ENCODE measurements at regions of chr6 and their contacts with region 1.

Region 1: GRCh38 chr6:27893059-27893835 is 18.9 kb downstream of the OR2B2 start:
- DNase-seq: peak; percentile 96
- H3K4me3 ChIP-seq: peak overlapping the region; percentile 94
- H3K27ac ChIP-seq: peak overlapping the region; percentile 100
- H3K4me1 ChIP-seq: peaks cover 36% of the 10 kb centered on the region
- CTCF ChIP-seq: no peak

Region 2: GRCh38 chr6:26054857-26055669 is 1838.2 kb before region 1 on chr6:
- CTCF ChIA-PET with region 1: no interaction called
- POLR2A ChIA-PET with region 1: interaction called, 10 read pairs
- intact Hi-C with region 1: no loop called
- DNase-seq: peak; percentile 93
- H3K4me3 ChIP-seq: peak overlapping the region; percentile 70
- H3K27ac ChIP-seq: peak overlapping the region; percentile 93
- H3K4me1 ChIP-seq: peaks cover 41% of the 10 kb centered on the region
- CTCF ChIP-seq: no peak

Region 3: DNA sequence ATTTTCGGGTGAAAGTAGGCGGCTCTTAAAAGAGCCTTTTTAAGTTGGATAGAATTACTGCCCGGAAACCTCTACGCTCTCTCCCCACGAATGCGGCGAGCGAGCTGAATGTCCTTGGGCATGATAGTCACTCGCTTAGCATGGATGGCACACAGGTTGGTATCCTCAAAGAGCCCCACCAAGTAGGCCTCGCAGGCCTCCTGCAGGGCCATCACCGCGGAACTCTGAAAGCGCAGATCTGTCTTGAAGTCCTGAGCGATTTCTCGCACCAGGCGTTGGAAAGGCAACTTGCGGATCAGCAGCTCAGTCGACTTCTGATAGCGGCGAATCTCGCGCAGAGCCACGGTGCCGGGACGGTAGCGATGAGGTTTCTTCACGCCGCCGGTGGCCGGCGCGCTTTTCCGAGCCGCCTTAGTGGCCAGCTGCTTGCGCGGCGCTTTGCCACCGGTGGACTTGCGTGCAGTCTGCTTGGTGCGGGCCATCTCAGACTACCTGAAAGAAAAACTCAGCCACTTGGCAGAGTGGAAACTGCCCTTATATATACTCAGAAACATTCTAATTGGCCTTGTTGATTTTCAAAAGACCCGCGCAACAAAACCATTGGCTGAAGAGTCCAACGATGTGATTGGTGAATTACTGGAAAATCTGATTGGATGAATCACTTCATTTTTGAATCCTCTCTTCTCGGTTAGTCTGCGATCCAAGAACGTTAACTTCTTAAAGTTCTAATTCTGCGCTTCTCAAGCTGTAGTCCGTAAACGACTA is 1622.2 kb before region 1 on chr6:
- CTCF ChIA-PET with region 1: no interaction called
- POLR2A ChIA-PET with region 1: interaction called, 9 read pairs
- intact Hi-C with region 1: loop called (anchors 5 kb)
- DNase-seq: peak; percentile 98
- H3K4me3 ChIP-seq: peak overlapping the region; percentile 87
- H3K27ac ChIP-seq: peak overlapping the region; percentile 99
- H3K4me1 ChIP-seq: peaks cover 42% of the 10 kb centered on the region
- CTCF ChIP-seq: no peak; the same call in 1 of the 2 replicates

Region 4: DNA sequence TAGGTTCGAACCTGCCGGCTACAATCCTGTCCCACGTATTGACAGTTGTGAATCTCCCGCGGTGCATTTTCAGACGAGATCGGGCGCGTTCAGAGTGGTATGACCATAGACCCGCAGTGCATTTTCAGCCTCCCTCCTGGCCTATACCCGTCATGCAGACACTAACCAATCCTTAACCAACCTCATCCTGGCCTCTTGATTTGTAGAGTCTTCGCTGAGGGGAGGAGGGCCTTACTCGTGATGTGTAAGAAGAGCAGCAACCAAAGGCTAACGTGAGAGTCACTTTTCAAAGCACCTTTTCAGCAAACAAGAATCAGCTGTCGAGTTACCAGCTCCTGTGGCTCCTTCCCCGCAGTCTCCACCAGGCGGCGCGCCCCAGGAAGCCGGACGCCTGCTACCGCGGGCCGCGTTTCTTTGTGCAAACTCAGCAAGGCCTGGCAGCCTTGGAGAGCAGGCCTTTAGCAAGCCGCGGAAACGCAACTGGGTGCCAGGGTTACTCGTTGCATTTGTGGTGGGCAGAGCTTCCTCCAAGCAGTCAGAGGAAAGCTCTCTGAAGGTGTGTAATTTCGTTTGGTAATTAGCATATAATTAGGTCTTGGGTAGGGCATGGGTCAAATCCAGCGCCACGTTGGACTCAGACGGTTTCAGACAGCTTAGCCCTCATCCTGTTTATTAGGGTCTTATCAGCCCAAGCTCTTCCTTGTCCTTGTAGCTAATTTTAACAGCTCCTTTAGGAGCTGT is 120.8 kb before region 1 on chr6:
- CTCF ChIA-PET with region 1: no interaction called
- POLR2A ChIA-PET with region 1: no interaction called
- intact Hi-C with region 1: no loop called
- DNase-seq: peak; percentile 80
- H3K4me3 ChIP-seq: no peak overlapping the region
- H3K27ac ChIP-seq: no peak overlapping the region
- H3K4me1 ChIP-seq: peaks cover 8% of the 10 kb centered on the region
- CTCF ChIP-seq: peak; percentile 87

Region 5: DNA sequence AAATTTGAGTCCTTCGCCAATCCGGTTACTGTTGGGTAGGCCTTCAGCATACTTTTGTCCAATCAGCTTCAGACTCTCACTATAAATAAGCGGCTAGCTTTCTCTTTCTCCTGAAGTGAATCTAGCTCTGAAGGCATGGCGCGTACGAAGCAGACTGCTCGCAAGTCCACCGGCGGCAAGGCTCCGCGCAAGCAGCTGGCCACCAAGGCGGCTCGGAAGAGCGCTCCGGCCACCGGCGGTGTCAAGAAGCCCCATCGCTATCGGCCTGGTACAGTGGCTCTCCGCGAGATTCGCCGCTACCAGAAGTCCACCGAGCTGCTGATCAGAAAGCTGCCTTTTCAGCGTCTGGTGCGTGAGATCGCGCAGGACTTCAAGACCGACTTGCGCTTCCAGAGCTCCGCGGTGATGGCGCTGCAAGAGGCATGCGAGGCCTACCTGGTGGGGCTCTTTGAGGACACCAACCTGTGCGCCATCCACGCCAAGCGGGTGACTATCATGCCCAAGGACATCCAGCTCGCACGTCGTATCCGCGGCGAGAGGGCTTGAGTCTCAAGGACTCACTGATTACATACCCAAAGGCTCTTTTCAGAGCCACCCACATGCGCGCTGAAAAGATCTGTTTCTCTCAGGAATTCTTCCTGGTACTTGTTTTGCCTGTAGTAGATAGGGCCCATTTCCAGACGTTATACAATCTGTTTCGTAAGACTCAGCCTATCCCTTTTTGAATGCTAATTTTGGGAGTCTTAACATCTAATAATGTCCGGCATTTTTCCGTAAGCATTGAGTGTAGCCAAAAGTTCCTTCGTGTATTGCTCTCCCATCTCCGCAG is 83.1 kb before region 1 on chr6:
- CTCF ChIA-PET with region 1: interaction called, 3 read pairs
- POLR2A ChIA-PET with region 1: interaction called, 286 read pairs
- intact Hi-C with region 1: loop called (anchors 2 kb)
- DNase-seq: peak; percentile 96
- H3K4me3 ChIP-seq: peak overlapping the region; percentile 82
- H3K27ac ChIP-seq: peak overlapping the region; percentile 96
- H3K4me1 ChIP-seq: peaks cover 62% of the 10 kb centered on the region
- CTCF ChIP-seq: peak; percentile 12; the same call in 1 of the 2 replicates

Region 6: GRCh38 chr6:27864906-27865849 is 28.1 kb before region 1 on chr6:
- CTCF ChIA-PET with region 1: interaction called, 3 read pairs
- POLR2A ChIA-PET with region 1: interaction called, 407 read pairs
- intact Hi-C with region 1: loop called (anchors 1 kb)
- DNase-seq: peak; percentile 99
- H3K4me3 ChIP-seq: peak overlapping the region; percentile 67
- H3K27ac ChIP-seq: peak overlapping the region; percentile 99
- H3K4me1 ChIP-seq: peaks cover 60% of the 10 kb centered on the region
- CTCF ChIP-seq: no peak

Region 7: DNA sequence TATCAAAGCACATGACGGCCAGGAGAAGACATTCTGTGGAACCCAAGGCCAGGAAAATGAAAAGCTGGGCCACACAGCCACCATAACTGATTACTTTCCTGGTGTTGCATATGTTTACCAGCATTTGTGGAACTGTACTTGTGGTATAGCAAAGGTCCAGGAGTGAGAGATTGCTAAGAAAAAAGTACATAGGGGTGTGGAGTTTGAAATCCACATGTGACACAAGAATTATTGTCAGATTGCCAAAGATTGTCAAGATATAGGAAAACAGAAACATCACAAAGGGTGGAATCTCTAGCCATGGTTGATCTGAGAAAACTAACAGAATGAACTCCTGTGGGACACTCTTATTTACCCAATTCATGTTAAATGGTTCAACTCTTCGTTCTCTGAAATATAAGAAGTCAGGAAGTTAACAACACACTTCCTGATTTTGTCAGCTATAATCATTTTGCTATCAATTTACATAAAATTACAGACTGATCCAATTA is 18.8 kb after region 1 on chr6 and contains the start of gene OR2B2:
- CTCF ChIA-PET with region 1: no interaction called
- POLR2A ChIA-PET with region 1: no interaction called
- intact Hi-C with region 1: no loop called
- DNase-seq: no peak
- H3K4me3 ChIP-seq: no peak within 1 kb of the TSS
- H3K27ac ChIP-seq: no peak within 1 kb of the TSS
- H3K4me1 ChIP-seq: no peaks in the 10 kb centered on the region
- CTCF ChIP-seq: no peak
- total RNA-seq, gene OR2B2: not detected in 2 replicates

Region 8: GRCh38 chr6:28053584-28053983 is 160.3 kb after region 1 on chr6:
- CTCF ChIA-PET with region 1: no interaction called
- POLR2A ChIA-PET with region 1: no interaction called
- intact Hi-C with region 1: no loop called
- DNase-seq: no peak
- H3K4me3 ChIP-seq: no peak overlapping the region
- H3K27ac ChIP-seq: no peak overlapping the region
- H3K4me1 ChIP-seq: no peaks in the 10 kb centered on the region
- CTCF ChIP-seq: no peak

Region 9: DNA sequence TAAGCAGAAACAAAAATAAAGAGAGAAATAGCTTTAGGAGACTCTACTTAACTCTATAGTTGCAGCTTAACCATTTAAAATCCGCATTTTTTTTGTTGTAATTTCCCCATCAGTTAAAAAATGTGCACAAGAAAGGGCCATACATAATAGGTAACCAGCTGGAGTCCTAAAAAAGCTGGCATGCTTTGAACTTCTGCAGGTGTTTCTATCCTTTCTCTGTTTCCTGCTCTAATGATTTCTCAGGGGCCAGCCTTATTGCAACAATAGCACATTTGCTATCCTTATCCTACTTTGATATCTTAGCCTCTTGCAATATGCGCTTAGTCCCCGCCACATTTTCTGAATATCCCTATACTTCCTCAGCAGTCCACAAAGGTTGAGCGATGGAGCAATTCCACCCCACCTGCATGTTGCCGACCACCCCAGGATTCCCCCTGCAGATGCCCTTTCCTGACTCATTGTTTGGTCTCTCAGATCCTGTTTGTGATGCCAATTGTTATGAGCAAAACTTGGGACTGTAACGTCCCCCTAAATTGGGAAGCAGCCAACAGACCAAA is 982.0 kb after region 1 on chr6:
- CTCF ChIA-PET with region 1: no interaction called
- POLR2A ChIA-PET with region 1: interaction called, 11 read pairs
- intact Hi-C with region 1: loop called (anchors 5 kb)
- DNase-seq: peak; percentile 90
- H3K4me3 ChIP-seq: peak overlapping the region; percentile 47
- H3K27ac ChIP-seq: peak overlapping the region; percentile 99
- H3K4me1 ChIP-seq: peaks cover 77% of the 10 kb centered on the region
- CTCF ChIP-seq: no peak

Measured in OCI-LY7 (cell line).